B cell (primary cell): ENCODE measurements at regions of chr17 and their contacts with region 1.

Region 1: GRCh38 chr17:39980351-39981206 is at the start of gene PSMD3:
- DNase-seq: peak; percentile 100
- ATAC-seq: peak; percentile 92
- H3K4me3 ChIP-seq: peak within 1 kb of the TSS; percentile 76 to 93 (median 91)
- H3K4me3 Mint-ChIP-seq: peak within 1 kb of the TSS; percentile 96
- H3K27ac ChIP-seq: peak within 1 kb of the TSS; percentile 92 to 97
- H3K27ac Mint-ChIP-seq: peak within 1 kb of the TSS; percentile 95
- H3K4me1 ChIP-seq: peaks cover 25 to 26% of the 10 kb centered on the region in 2 donors
- H3K4me1 Mint-ChIP-seq: peaks cover 38% of the 10 kb centered on the region
- H3K27me3 ChIP-seq: no peaks in the 10 kb centered on the region
- H3K27me3 Mint-ChIP-seq: no peaks in the 10 kb centered on the region
- CTCF ChIP-seq: peak; percentile 76
- total RNA-seq, gene PSMD3: 69.4 and 76.6 TPM in 2 replicates

Region 2: GRCh38 chr17:39401412-39402243 is 579.0 kb before region 1 on chr17 and contains the start of gene FBXL20:
- CTCF ChIA-PET with region 1: no interaction called
- POLR2A ChIA-PET with region 1: no interaction called
- intact Hi-C with region 1: loop called (anchors 10 kb)
- DNase-seq: peak; percentile 95
- ATAC-seq: peak; percentile 76
- H3K4me3 ChIP-seq: peak within 1 kb of the TSS; percentile 63 to 90 (median 88)
- H3K4me3 Mint-ChIP-seq: peak within 1 kb of the TSS; percentile 91
- H3K27ac ChIP-seq: peak within 1 kb of the TSS; percentile 52 to 88
- H3K27ac Mint-ChIP-seq: peak within 1 kb of the TSS; percentile 96
- H3K4me1 ChIP-seq: peaks cover 14 to 15% of the 10 kb centered on the region in 2 donors
- H3K4me1 Mint-ChIP-seq: peaks cover 24% of the 10 kb centered on the region
- H3K27me3 ChIP-seq: no peaks in the 10 kb centered on the region
- H3K27me3 Mint-ChIP-seq: no peaks in the 10 kb centered on the region
- CTCF ChIP-seq: no peak
- total RNA-seq, gene FBXL20: 36.2 and 38.1 TPM in 2 replicates

Region 3: GRCh38 chr17:39636927-39637736 is 343.4 kb before region 1 on chr17 and contains the start of gene STARD3:
- CTCF ChIA-PET with region 1: no interaction called
- POLR2A ChIA-PET with region 1: no interaction called
- intact Hi-C with region 1: loop called (anchors 5 kb)
- DNase-seq: peak; percentile 93
- ATAC-seq: peak; percentile 92
- H3K4me3 ChIP-seq: peak within 1 kb of the TSS; percentile 76 to 94 (median 82)
- H3K4me3 Mint-ChIP-seq: peak within 1 kb of the TSS; percentile 95
- H3K27ac ChIP-seq: peak within 1 kb of the TSS; percentile 89 to 90
- H3K27ac Mint-ChIP-seq: peak within 1 kb of the TSS; percentile 91
- H3K4me1 ChIP-seq: peaks cover 49 to 63% of the 10 kb centered on the region in 2 donors
- H3K4me1 Mint-ChIP-seq: peaks cover 60% of the 10 kb centered on the region
- H3K27me3 ChIP-seq: peaks cover 0 to 3% (median 0%) of the 10 kb centered on the region in 4 experiments
- H3K27me3 Mint-ChIP-seq: no peaks in the 10 kb centered on the region
- CTCF ChIP-seq: no peak
- total RNA-seq, gene STARD3: 93.1 and 101 TPM in 2 replicates

Region 4: DNA sequence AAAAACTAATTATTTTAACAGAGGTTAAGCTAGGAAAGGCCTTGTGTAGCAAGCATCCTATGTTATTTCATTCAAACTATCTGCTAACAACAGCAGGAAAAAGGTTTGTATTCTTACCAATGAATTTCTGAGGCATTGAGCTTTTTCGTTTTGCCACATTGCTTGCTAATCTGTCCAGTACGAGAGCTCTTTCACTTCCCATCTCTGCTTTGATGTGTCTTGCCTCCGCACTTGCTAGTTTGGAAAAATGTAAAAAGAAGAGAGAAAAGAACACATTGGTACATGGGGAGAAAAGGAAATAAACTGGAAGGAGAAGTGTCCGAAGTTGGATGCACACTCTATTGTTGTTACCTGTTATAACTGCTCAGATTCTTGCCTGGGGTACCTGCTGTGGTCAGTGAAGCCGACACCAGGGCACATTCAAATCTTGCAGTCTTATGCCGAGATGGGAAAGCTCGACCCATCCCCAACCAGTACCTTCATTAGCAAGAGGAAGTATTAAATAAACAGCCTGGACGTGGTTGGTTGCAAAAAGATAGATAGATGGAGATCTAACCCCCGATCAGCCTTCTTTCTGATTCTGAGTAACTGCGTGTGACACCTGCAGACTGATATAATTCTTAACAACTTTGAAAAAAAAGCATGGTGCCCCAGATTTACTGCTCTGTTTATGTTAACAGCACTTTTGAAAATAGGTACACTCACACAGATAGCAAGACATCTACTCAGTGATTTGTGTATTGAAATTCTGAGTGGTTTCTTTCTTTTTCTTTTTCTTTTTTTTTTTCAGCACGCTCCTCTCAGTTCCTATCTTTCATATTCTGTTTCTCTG is 202.8 kb before region 1 on chr17:
- CTCF ChIA-PET with region 1: interaction called, 12 read pairs
- POLR2A ChIA-PET with region 1: no interaction called
- intact Hi-C with region 1: loop called (anchors 5 kb)
- DNase-seq: peak; percentile 59
- ATAC-seq: peak; percentile 36
- H3K4me3 ChIP-seq: peak overlapping the region; percentile 17 to 86 (median 51)
- H3K4me3 Mint-ChIP-seq: peak overlapping the region; percentile 89
- H3K27ac ChIP-seq: peak overlapping the region; percentile 33 to 86
- H3K27ac Mint-ChIP-seq: peak overlapping the region; percentile 93
- H3K4me1 ChIP-seq: peaks cover 80 to 90% of the 10 kb centered on the region in 2 donors
- H3K4me1 Mint-ChIP-seq: peaks cover 81% of the 10 kb centered on the region
- H3K27me3 ChIP-seq: no peaks in the 10 kb centered on the region
- H3K27me3 Mint-ChIP-seq: no peaks in the 10 kb centered on the region
- CTCF ChIP-seq: no peak

Region 5: GRCh38 chr17:39872751-39873150 is 107.8 kb before region 1 on chr17:
- CTCF ChIA-PET with region 1: interaction called, 73 read pairs
- POLR2A ChIA-PET with region 1: interaction called, 4 read pairs
- intact Hi-C with region 1: loop called (anchors 1 kb)
- DNase-seq: peak; percentile 56
- ATAC-seq: peak; percentile 31
- H3K4me3 ChIP-seq: peak overlapping the region in 2 of 5 experiments; percentile 2 to 6
- H3K4me3 Mint-ChIP-seq: peak overlapping the region; percentile 67
- H3K27ac ChIP-seq: peak overlapping the region in 1 of 2 donors; percentile 36
- H3K27ac Mint-ChIP-seq: peak overlapping the region; percentile 50
- H3K4me1 ChIP-seq: peaks cover 31 to 45% of the 10 kb centered on the region in 2 donors
- H3K4me1 Mint-ChIP-seq: peaks cover 44% of the 10 kb centered on the region
- H3K27me3 ChIP-seq: no peaks in the 10 kb centered on the region
- H3K27me3 Mint-ChIP-seq: no peaks in the 10 kb centered on the region
- CTCF ChIP-seq: peak; percentile 82

Region 6: DNA sequence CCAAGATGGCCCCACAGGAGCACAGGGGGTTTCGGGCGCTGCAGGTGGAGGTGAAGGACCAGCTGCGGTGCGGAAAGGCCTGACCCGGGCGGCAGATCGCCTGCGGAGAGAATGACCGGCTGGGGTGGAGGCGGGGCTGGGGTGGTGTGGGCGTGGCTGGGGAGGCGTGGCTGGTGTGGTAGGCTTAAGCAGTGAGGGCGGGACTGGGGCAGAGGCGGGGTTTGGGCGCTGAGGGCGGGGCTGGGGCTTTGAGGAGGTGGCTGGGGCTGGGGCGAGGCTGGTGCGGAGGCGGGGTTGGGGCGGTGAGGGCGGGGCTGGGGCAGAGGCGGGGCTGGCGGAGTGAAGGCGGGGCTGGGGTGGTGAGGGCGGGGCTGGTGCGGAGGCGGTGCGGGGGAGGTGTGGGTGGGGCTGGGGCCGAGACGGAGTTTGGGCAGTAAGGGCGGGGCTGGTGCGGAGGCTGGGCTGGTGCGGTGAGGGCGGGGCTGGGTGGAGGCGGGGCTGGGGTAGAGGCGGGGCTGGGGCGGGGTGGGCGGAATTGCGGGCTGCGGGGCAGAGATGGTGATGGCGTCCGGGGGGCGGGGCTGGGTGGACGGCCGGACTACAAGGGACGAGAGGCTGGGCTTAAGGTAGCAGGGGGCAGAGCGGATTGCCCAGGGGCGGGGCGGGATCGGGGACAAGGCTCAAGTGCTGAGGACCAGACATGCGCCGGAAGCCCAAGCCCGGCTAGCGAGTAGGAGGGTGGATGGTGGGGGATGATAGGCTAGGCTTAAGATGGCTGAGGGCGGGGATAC is 27.7 kb before region 1 on chr17:
- CTCF ChIA-PET with region 1: interaction called, 97 read pairs
- POLR2A ChIA-PET with region 1: interaction called, 13 read pairs
- intact Hi-C with region 1: loop called (anchors 1 kb)
- DNase-seq: peak; percentile 96
- ATAC-seq: peak; percentile 84
- H3K4me3 ChIP-seq: peak overlapping the region in 4 of 5 experiments; percentile 50 to 66 (median 61)
- H3K4me3 Mint-ChIP-seq: peak overlapping the region; percentile 87
- H3K27ac ChIP-seq: peak overlapping the region; percentile 62
- H3K27ac Mint-ChIP-seq: peak overlapping the region; percentile 81
- H3K4me1 ChIP-seq: peaks cover 24 to 38% of the 10 kb centered on the region in 2 donors
- H3K4me1 Mint-ChIP-seq: peaks cover 31% of the 10 kb centered on the region
- H3K27me3 ChIP-seq: no peaks in the 10 kb centered on the region
- H3K27me3 Mint-ChIP-seq: no peaks in the 10 kb centered on the region
- CTCF ChIP-seq: no peak

Region 7: DNA sequence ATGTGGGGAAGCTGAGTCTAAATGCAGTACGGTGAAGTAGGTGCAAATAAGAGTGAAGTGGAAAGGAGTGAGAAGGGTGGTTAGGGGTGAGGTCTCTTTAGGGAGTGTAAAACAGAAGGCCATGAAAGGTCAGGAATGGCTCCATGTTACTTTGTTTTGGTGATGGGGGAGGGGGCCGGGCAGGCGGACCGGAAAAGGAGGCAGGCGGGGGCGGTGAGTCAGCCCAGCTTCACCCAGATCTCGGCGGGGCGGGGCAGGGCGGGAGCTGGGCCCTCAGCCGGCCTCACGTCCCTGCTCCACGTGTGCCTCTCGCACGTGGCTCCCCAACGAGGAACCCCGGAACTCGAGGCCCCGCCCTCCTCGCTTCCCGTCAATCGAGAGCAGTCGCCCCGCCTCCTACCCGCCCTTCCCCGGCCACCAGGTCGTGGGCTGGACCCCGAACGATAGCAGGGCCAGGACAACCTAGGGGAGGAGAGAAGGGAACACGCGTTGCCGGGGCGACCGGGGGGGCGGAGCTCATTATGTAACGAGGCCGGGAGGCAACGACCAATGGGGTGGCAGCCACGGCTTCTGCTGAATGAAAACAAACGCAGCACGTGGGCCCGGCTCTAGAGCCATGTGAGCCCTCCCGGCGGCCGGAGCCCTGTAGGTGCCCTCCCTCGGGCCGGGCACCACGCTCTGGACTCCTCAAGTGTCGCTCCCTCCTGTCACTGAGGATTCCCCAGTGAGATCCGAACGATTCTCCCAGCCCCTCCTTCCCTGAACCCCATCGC is 118.5 kb after region 1 on chr17:
- CTCF ChIA-PET with region 1: no interaction called
- POLR2A ChIA-PET with region 1: interaction called, 3 read pairs
- intact Hi-C with region 1: loop called (anchors 1 kb)
- DNase-seq: peak; percentile 98
- ATAC-seq: peak; percentile 64
- H3K4me3 ChIP-seq: peak overlapping the region; percentile 51 to 91 (median 78)
- H3K4me3 Mint-ChIP-seq: peak overlapping the region; percentile 77
- H3K27ac ChIP-seq: peak overlapping the region; percentile 92 to 93
- H3K27ac Mint-ChIP-seq: peak overlapping the region; percentile 89
- H3K4me1 ChIP-seq: peaks cover 53 to 70% of the 10 kb centered on the region in 2 donors
- H3K4me1 Mint-ChIP-seq: peaks cover 74% of the 10 kb centered on the region
- H3K27me3 ChIP-seq: no peaks in the 10 kb centered on the region
- H3K27me3 Mint-ChIP-seq: no peaks in the 10 kb centered on the region
- CTCF ChIP-seq: no peak